ENCODE measurements at regions of chr7 and their contacts with region 1.

Region 1: DNA sequence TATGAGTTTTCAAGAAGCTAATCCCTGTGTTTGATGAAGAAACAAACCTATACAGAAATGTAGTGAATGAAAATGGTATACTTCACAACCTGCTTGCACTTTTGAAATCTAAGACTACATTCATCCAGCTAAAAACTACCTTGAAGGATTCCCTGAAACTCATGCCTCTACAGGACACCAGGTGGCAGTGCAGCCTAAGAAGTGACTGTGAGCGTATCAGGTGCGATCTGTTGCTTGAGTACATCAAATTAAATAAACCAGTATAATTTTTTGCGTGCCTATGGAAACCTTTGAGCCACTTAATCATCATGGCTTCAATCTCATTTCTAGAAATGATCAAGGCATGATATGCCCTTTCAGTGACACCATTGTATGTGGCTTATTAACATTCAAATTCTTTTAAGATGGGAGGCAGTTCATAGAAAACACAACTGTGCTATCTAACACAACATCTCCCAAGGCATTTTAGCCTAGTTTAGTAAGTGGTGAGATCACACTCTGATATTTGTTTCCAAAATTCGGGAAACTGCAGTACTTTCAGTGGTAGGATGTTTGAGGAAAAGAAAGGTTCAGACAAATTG is 57.4 kb downstream of the PPP1R17 start:
- DNase-seq: peak; percentile 48 to 96 (median 80)

Region 2: DNA sequence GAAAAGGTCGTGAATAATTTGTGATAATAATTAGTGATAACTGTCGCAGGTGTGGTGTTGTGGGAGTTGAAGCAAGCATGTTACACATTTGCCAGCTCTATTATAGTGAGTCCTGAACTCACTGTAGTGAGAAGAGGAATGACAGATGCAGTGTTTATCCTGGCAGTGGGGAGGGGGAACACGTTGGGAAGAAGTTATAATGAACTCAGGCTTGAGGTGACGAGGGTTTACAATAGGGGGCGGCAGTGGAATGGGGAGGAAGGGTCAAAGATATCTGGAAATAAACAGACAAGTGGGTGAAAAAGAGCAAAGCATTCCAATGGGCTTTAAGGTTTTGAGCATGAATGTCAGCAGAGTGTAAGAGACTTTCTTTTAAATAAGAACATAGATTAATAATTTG is 180.9 kb before region 1 on chr7:
- intact Hi-C with region 1: no loop called
- DNase-seq: no peak

Region 3: GRCh38 chr7:32204361-32205018 is 460.1 kb after region 1 on chr7:
- intact Hi-C with region 1: loop called (anchors 1 kb)
- DNase-seq: peak; percentile 68 to 98 (median 86)

Region 4: GRCh38 chr7:32347244-32347828 is 603.0 kb after region 1 on chr7:
- intact Hi-C with region 1: loop called (anchors 5 kb)
- DNase-seq: peak in 2 of 10 donors; percentile 22 to 38

Region 5: GRCh38 chr7:32479574-32480200 is 735.3 kb after region 1 on chr7:
- intact Hi-C with region 1: loop called (anchors 10 kb)
- DNase-seq: no peak